ENCODE measurements at regions of chr2 and their contacts with region 1.

Region 1: GRCh38 chr2:26717362-26717761 is 24.8 kb downstream of the KCNK3 start:
- DNase-seq: no peak
- ATAC-seq: no peak

Region 2: DNA sequence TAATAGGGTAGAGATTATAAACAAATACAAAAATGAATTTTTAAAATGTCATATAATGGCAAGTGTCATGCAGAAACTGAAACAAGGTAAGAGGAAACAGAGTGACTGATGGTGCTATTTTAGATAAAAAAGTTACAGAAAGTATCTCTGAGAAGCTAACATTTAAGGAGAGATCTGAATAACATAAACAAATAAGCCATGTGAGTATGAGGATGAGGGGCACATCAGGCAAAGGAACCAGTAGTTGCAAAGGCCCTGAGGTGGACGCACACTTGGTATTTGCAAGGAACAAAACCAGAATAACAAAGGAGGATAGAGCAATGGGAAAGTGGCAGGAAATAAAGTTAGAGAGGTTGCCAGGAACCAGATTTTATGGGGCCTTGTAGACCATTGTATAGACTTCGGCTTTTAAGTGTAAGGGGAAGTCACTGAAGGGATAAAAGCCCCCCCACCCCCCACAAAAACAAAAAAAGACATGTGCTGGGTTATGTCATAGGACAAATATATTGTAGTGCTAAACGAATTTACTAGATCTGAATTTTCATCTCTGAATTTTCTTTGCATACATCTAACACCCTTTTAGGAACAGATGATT is 1203.2 kb before region 1 on chr2:
- intact Hi-C with region 1: no loop called
- DNase-seq: no peak
- ATAC-seq: no peak

Region 3: GRCh38 chr2:26503231-26503880 is 214.0 kb before region 1 on chr2:
- intact Hi-C with region 1: no loop called
- DNase-seq: peak; percentile 85
- ATAC-seq: peak; percentile 90

Region 4: GRCh38 chr2:26655611-26656195 is 61.7 kb before region 1 on chr2:
- intact Hi-C with region 1: loop called (anchors 2 kb)
- DNase-seq: no peak
- ATAC-seq: no peak

Region 5: DNA sequence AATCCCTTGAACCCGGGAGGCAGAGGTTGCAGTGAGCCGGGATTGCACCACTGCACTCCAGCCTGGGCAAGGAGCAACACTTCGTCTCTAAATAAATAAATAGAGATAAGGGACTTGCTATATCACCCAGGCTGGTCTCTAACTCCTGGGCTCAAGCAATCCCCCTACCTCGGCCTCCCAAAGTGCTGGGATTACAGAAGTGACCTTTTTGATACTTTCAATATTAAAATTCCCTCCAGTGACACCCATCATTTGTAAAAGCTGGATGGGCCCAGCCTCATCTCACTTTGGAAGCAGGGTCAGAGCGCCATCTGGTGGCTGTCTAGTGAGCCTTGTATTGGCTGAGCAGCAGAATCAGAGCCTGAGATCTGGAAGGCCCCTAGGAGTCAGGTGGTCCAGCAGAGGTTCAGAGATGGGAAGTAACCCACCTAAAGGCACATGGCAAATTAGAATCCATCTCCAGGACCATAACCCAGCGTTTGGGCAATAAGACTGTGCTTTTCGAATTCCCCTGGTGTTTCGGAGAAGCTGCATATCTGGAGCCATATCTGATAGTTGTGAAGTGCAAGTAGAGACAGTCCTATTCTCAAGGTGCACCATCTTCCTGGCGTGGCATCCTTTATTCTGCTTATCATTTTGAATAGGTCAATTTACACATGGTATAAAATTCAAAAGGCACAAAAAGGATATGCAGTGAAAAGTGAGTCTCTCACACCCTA is 28.4 kb after region 1 on chr2:
- intact Hi-C with region 1: no loop called
- DNase-seq: peak; percentile 93
- ATAC-seq: peak; percentile 93